ENCODE measurements at regions of chr22 and their contacts with region 1.

Region 1: GRCh38 chr22:24244101-24244787 is 638 bp downstream of the GGT5 start:
- DNase-seq: no peak
- H3K4me3 ChIP-seq: no peak overlapping the region
- H3K27ac ChIP-seq: no peak overlapping the region
- H3K4me1 ChIP-seq: peaks cover 0 to 3% (median 0%) of the 10 kb centered on the region in 4 experiments; a peak in 2 of 7 replicates
- H3K27me3 ChIP-seq: no peaks in the 10 kb centered on the region; a peak in 1 of 7 replicates
- CTCF ChIP-seq: no peak
- EP300 ChIP-seq: no peak
- POLR2A ChIP-seq: no peak
- RAD21 ChIP-seq: no peak

Region 2: DNA sequence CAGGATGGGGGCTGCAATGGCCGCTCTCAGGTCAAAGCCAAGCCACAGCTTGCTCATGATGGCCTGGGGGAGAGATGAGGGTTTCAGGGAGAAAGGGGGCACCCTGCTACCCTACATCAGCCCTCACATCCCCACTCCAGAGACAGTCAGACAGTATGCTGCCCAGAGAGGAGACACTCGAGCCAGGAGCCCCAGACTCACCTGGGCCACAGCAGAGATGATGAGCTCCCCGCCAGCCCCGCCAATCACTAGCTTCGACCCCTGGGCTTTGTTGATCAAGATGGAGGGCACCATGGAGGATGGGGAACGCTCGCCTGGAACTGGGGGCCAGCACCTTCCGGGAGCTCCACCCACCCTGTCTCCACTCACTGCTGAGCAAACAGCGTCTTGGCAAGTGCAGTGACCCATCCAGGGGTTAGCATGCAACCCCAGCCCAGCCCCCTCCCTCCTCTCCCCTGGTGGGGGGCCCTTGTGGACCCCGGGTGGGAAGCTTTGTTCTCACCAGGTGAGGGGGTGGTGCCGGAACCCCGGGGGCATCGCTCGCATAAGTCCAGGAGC is 19.1 kb before region 1 on chr22:
- CTCF ChIA-PET with region 1: interaction called, 13 read pairs
- POLR2A ChIA-PET with region 1: no interaction called
- DNase-seq: no peak
- H3K4me3 ChIP-seq: no peak overlapping the region
- H3K27ac ChIP-seq: no peak overlapping the region
- H3K4me1 ChIP-seq: no peaks in the 10 kb centered on the region
- H3K27me3 ChIP-seq: no peaks in the 10 kb centered on the region
- CTCF ChIP-seq: no peak
- EP300 ChIP-seq: no peak
- POLR2A ChIP-seq: no peak
- RAD21 ChIP-seq: no peak